ENCODE measurements at regions of chr7 and their contacts with region 1.

Region 1: DNA sequence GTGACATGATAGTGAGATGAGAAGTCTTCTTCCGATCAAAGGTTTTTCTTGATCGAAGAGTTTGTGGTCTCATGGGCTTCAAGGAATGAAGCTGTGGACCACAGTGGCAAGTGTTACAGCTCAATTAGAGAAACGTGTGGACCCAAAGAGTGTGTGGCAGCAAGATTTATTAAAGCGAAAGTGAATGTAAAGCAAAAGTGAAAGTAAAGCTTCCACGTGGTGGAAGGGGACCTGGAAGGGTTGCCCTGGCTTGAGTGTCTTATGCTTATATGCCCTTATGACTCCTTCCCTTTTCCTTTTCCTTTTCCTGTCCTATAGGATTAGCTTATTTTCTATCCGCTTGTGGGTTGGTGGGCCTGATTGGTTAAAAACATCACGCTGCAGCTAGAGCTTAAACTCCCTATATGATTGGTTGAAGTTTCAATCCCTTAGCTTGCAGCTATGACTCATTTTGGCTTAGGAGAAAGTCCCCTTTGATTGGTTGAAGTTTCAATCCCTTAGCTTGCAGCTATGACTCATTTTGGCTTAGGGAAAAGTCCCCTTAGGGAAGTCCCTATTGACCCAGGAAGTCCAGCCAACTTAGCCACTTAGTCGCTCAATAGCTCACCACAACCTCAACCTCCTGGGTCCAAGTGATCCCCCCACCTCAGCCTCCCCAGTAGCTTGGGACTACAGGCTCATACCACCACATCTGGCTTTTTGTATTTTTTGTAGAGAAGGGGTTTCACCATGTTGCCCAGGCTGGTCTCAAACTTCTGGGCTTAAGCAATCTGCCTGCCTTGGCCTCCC is 34.7 kb downstream of the MRPS24 start:
- DNase-seq: peak; percentile 79
- H3K4me3 Mint-ChIP-seq: peak overlapping the region; percentile 73
- H3K27ac Mint-ChIP-seq: peak overlapping the region; percentile 88
- H3K4me1 Mint-ChIP-seq: peaks cover 12% of the 10 kb centered on the region
- H3K27me3 Mint-ChIP-seq: peaks cover 6% of the 10 kb centered on the region

Region 2: GRCh38 chr7:42940985-42941847 is 893.4 kb before region 1 on chr7:
- intact Hi-C with region 1: loop called (anchors 5 kb)
- DNase-seq: peak; percentile 93
- H3K4me3 Mint-ChIP-seq: no peak overlapping the region
- H3K27ac Mint-ChIP-seq: no peak overlapping the region
- H3K4me1 Mint-ChIP-seq: peaks cover 30% of the 10 kb centered on the region
- H3K27me3 Mint-ChIP-seq: no peaks in the 10 kb centered on the region

Region 3: GRCh38 chr7:43572516-43573049 is 262.1 kb before region 1 on chr7:
- intact Hi-C with region 1: loop called (anchors 2 kb)
- DNase-seq: peak; percentile 82
- H3K4me3 Mint-ChIP-seq: no peak overlapping the region
- H3K27ac Mint-ChIP-seq: peak overlapping the region; percentile 8
- H3K4me1 Mint-ChIP-seq: peaks cover 27% of the 10 kb centered on the region
- H3K27me3 Mint-ChIP-seq: no peaks in the 10 kb centered on the region

Region 4: GRCh38 chr7:43729214-43729923 is 105.3 kb before region 1 on chr7 and contains the start of gene COA1:
- intact Hi-C with region 1: loop called (anchors 2 kb)
- DNase-seq: peak; percentile 95
- H3K4me3 Mint-ChIP-seq: peak within 1 kb of the TSS; percentile 94
- H3K27ac Mint-ChIP-seq: peak within 1 kb of the TSS; percentile 89
- H3K4me1 Mint-ChIP-seq: peaks cover 26% of the 10 kb centered on the region
- H3K27me3 Mint-ChIP-seq: peaks cover 3% of the 10 kb centered on the region
- total RNA-seq, gene COA1: 79.0 and 79.3 TPM in 2 replicates

Region 5: GRCh38 chr7:43869006-43869866 is 34.6 kb after region 1 on chr7 and contains the start of gene MRPS24:
- intact Hi-C with region 1: loop called (anchors 2 kb)
- DNase-seq: peak; percentile 98
- H3K4me3 Mint-ChIP-seq: peak within 1 kb of the TSS; percentile 95
- H3K27ac Mint-ChIP-seq: peak within 1 kb of the TSS; percentile 84
- H3K4me1 Mint-ChIP-seq: peaks cover 18% of the 10 kb centered on the region
- H3K27me3 Mint-ChIP-seq: no peaks in the 10 kb centered on the region
- total RNA-seq, gene MRPS24: 119 and 123 TPM in 2 replicates

Measured in activated CD4-positive, alpha-beta T cell treated with anti-CD3 and anti-CD28 coated beads, Interleukin-2, amount 10 ng/mL, durations not matched to agents 24 days and 14 days (primary cell).